Esophagus muscularis mucosa (tissue), 4 donors: ENCODE measurements at regions of chr1 and their contacts with region 1.

Region 1: GRCh38 chr1:117128323-117129079 is 7.0 kb upstream of the TRIM45 start:
- DNase-seq: no peak
- H3K4me3 ChIP-seq: no peak overlapping the region
- H3K27ac ChIP-seq: no peak overlapping the region
- H3K4me1 ChIP-seq: peaks cover 0 to 6% (median 1%) of the 10 kb centered on the region in 4 donors
- H3K27me3 ChIP-seq: no peaks in the 10 kb centered on the region
- CTCF ChIP-seq: peak; percentile 51 to 58 (median 55)
- EP300 ChIP-seq: no peak
- POLR2A ChIP-seq: no peak

Region 2: GRCh38 chr1:117051224-117052064 is 77.1 kb before region 1 on chr1:
- intact Hi-C with region 1: no loop called
- DNase-seq: no peak
- H3K4me3 ChIP-seq: peak overlapping the region in 3 of 4 donors; percentile 7 to 18 (median 11)
- H3K27ac ChIP-seq: peak overlapping the region in 1 of 4 donors; percentile 8
- H3K4me1 ChIP-seq: peaks cover 0 to 5% (median 2%) of the 10 kb centered on the region in 4 donors
- H3K27me3 ChIP-seq: no peaks in the 10 kb centered on the region
- CTCF ChIP-seq: no peak
- EP300 ChIP-seq: no peak
- POLR2A ChIP-seq: no peak

Region 3: GRCh38 chr1:117067533-117068370 is 60.7 kb before region 1 on chr1:
- intact Hi-C with region 1: loop called (anchors 2 kb)
- DNase-seq: no peak
- H3K4me3 ChIP-seq: no peak overlapping the region
- H3K27ac ChIP-seq: no peak overlapping the region
- H3K4me1 ChIP-seq: no peaks in the 10 kb centered on the region
- H3K27me3 ChIP-seq: no peaks in the 10 kb centered on the region
- CTCF ChIP-seq: peak; percentile 79 to 82 (median 79)
- EP300 ChIP-seq: no peak
- POLR2A ChIP-seq: no peak

Region 4: GRCh38 chr1:117171900-117172511 is 43.5 kb after region 1 on chr1:
- intact Hi-C with region 1: no loop called
- DNase-seq: no peak
- H3K4me3 ChIP-seq: no peak overlapping the region
- H3K27ac ChIP-seq: no peak overlapping the region
- H3K4me1 ChIP-seq: peaks cover 0 to 4% (median 0%) of the 10 kb centered on the region in 4 donors
- H3K27me3 ChIP-seq: no peaks in the 10 kb centered on the region
- CTCF ChIP-seq: no peak
- EP300 ChIP-seq: no peak
- POLR2A ChIP-seq: no peak